ENCODE measurements at regions of chr12 and their contacts with region 1.

Region 1: DNA sequence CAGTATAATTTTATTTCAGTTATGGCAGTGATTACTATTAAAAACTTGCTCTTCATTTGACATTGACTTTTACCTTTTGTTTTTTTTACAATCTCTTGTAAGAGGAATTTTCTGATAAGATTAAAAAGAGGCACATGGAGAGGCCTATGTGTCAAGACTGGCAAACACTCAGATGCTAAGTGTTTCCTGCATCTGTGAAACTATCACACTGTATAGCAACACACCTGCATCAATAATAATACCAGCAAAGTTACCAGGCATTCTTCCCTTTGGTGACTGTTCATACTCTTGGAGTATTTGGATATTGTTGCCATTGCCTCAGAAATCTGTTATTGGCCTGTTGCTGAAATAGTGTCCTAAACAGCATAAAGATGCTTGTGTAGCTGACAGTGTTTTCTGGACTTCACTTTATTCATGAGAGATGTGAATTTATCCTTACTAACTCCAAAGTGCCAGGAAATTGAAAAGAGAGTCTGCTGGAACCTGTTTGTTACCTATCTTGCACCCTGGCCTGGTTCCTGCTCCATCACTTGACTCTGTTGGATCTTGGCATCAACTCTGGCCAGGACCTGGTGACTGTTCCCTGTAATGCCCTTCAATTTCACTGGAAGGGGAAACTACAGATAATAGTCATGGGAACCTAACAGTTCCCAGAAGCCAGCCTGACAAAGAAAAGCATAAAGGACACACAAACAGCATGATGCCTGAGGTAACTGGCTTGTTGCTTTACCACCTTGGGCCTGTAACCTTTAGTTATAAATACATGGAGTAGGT is 19.8 kb downstream of the SLC16A7 start:
- DNase-seq: no peak
- H3K4me3 ChIP-seq: no peak overlapping the region
- H3K27ac ChIP-seq: no peak overlapping the region
- H3K4me1 ChIP-seq: no peaks in the 10 kb centered on the region
- H3K27me3 ChIP-seq: no peaks in the 10 kb centered on the region
- CTCF ChIP-seq: no peak
- POLR2A ChIP-seq: no peak

Region 2: DNA sequence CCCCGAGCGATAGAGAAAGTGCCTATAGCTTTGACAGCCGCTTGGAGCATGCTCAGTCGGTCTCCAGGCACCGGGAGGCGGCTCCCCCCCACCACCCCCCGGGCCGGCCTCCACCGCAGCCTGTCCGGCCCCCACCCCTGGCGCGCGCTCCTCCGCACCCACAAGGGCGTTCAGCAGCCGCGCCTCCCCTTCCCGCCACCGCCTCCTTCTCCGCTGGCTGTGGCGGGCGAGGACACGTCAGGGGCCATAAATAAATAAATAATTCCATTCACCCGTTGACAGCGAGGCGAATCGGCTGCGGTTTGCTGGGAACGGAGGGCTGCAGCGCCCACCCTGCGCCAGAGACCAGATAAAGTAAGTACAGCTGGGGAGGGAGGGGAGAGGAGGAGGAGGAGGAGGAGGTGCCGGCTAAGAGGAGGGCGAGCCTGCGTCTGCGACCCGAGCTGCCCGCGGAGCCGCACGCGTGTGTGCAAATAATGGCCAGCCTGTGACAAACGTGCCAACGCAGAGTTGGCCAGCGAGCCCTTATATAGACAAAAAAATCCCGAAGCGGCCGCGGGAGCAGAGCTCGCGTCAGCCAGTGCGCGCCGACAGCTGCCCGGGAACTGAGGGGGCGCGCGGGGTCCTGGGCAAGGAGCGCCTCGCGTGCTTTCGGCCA is 19.6 kb before region 1 on chr12 and contains the start of gene SLC16A7:
- intact Hi-C with region 1: no loop called
- DNase-seq: peak; percentile 69 to 72
- H3K4me3 ChIP-seq: peak within 1 kb of the TSS; percentile 71 to 83 (median 78)
- H3K27ac ChIP-seq: peak within 1 kb of the TSS; percentile 92 to 98
- H3K4me1 ChIP-seq: no peaks in the 10 kb centered on the region
- H3K27me3 ChIP-seq: no peaks in the 10 kb centered on the region
- CTCF ChIP-seq: no peak
- POLR2A ChIP-seq: no peak
- total RNA-seq, gene SLC16A7: 14.5 to 53.4 (median 51.2) TPM

Region 3: GRCh38 chr12:59632408-59632807 is 16.8 kb after region 1 on chr12:
- intact Hi-C with region 1: loop called (anchors 2 kb)
- DNase-seq: peak in 1 of 2 donors; percentile 29
- H3K4me3 ChIP-seq: no peak overlapping the region
- H3K27ac ChIP-seq: no peak overlapping the region
- H3K4me1 ChIP-seq: no peaks in the 10 kb centered on the region
- H3K27me3 ChIP-seq: no peaks in the 10 kb centered on the region
- CTCF ChIP-seq: no peak
- POLR2A ChIP-seq: no peak

Region 4: DNA sequence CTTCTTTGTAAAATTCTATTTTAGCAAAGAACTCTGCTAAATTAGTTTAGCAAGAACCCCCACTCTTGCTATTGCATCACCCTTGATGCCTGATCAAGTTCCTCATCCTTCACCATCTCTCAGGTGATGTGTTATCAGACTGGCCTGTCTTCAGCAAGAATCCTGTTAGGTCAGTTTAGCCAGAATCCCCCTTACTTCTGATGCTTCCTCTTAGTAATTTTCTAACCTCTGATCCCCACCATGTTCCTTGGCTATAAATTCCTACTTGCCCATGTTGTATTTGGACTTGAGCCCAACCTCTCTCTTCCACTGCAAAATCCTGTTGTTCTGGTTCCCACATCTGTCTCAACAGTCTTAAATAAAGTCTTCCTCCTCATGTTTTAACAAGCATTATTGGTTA is 1656.8 kb after region 1 on chr12:
- intact Hi-C with region 1: no loop called
- DNase-seq: no peak
- H3K4me3 ChIP-seq: no peak overlapping the region
- H3K27ac ChIP-seq: no peak overlapping the region
- H3K4me1 ChIP-seq: no peaks in the 10 kb centered on the region
- H3K27me3 ChIP-seq: no peaks in the 10 kb centered on the region
- CTCF ChIP-seq: no peak
- POLR2A ChIP-seq: no peak